ENCODE measurements at regions of chr2 and their contacts with region 1.

Region 1: DNA sequence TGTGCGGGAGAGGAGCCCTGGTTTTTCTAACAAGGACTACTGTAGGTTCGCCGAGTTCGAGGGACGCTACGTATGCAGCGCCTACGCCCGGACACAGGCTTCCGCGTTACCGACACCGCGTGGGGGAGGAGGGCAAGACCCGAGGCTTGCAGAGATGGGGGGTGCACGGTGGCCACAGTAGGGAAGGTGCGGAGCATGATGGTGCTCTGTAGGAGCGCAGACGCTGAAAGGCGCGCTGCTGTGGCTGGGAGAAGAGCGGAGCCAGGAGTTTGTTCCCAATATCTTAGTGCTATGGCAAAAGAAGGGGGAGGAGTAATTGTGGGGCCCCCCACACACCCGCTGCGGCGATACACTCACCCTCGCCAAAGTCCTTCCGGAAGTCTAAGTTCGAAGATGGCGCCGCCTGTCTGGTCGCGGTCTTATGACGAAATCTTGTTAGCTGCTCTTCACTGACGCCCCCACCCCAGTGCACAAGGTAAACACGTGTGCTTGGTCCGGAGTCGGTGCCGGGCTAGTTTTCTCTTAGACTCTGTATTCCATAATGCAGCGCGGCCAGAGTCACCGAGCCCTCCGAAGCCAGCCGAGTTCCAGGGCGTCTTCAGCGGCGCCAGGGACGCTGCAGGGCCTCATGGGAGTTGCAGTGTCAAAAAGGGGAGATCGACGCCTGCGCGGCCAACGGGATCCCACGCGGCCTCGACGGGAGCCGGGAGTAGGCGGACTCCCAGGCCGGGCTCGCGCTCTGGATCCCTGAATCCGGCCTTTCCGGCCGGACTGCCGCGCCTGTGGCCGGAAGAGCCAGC is at the start of gene GTF3C2:
- DNase-seq: peak; percentile 96 to 97
- H3K4me3 ChIP-seq: peak within 1 kb of the TSS; percentile 33 to 99 (median 73)
- H3K27ac ChIP-seq: peak within 1 kb of the TSS; percentile 79 to 91 (median 85)
- H3K4me1 ChIP-seq: peaks cover 22 to 30% of the 10 kb centered on the region in 2 donors
- H3K27me3 ChIP-seq: no peaks in the 10 kb centered on the region
- CTCF ChIP-seq: peak in 3 of 6 experiments; percentile 11 to 31 (median 19)
- POLR2A ChIP-seq: peak in 1 of 2 donors; percentile 63
- total RNA-seq, gene GTF3C2: 44.7 to 86.6 (median 51.8) TPM

Region 2: GRCh38 chr2:27264753-27265535 is 91.6 kb before region 1 on chr2:
- intact Hi-C with region 1: no loop called
- DNase-seq: peak; percentile 73 to 81
- H3K4me3 ChIP-seq: peak overlapping the region in 1 of 3 donors; percentile 14
- H3K27ac ChIP-seq: no peak overlapping the region
- H3K4me1 ChIP-seq: peaks cover 30 to 38% of the 10 kb centered on the region in 2 donors
- H3K27me3 ChIP-seq: peaks cover 29% of the 10 kb centered on the region
- CTCF ChIP-seq: peak in 4 of 6 experiments; percentile 30 to 61 (median 50)
- POLR2A ChIP-seq: no peak

Region 3: DNA sequence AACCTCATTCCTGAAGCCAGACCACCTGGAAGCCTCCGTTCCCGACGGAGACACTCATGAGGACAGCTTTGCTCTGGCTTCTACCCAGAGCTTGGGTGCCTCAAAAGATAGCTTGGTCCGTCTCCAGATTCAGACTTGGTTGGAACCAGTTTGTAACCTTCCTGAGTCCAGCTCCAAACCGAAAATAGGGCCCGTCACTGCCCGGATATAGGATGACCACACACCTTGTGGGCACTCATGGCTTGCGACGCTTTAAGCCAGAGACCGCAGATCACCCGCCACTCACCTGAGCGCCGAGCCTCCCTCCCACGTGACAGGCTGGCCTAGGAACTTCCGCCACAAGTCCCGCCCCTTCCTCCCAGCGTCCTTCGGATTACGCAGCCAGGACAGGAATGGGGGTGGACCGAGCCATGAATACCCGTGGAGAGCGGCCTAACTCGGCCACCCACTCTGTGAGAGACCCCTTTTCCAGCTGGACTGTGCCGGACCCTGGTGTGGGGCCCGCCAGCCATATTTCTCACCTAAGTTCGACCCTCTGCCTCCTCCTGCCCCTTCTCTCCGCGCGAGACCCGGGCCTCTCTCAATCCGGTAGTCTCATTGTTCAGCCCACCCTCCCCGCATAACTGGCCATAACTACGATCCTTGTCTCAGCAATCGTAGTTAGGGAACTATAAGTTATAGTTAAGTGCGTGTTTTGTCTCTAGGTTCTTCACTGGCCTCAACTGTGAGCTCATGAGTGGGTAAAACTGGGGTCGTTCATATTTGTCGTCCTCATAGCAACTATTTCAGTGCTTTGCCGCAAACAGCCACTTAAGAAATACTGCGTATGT is 33.6 kb before region 1 on chr2 and contains the start of gene MPV17:
- intact Hi-C with region 1: loop called (anchors 5 kb)
- DNase-seq: peak; percentile 94 to 95
- H3K4me3 ChIP-seq: peak within 1 kb of the TSS; percentile 53 to 81 (median 60)
- H3K27ac ChIP-seq: peak within 1 kb of the TSS; percentile 77 to 94 (median 89)
- H3K4me1 ChIP-seq: peaks cover 11 to 25% of the 10 kb centered on the region in 2 donors
- H3K27me3 ChIP-seq: no peaks in the 10 kb centered on the region
- CTCF ChIP-seq: no peak
- POLR2A ChIP-seq: peak; percentile 79 to 95
- total RNA-seq, gene MPV17: 92.9 to 151 (median 116) TPM